ENCODE measurements at regions of chr19 and their contacts with region 1.

Region 1: DNA sequence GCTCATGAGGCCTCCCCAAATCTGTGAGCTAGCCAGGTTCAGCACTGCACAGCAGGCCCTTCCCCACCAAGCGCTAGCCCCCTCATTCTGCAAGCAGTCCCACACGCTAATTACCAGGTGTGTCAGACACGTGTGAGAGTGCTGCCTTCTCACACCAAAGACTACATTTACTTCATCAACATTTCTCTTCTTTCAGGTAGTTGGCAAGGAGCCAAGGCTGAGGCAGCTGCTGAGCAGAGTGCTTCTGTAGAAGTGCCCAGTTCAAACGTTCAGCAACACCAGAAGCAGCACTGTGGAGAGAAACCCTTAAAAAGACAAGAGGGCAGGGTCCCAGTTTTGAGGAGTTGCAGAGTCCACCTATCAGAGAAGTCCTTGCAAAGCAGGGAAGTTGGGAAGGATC is 6.4 kb downstream of the ZNF773 start:
- DNase-seq: no peak
- ATAC-seq: no peak
- H3K4me3 ChIP-seq: no peak overlapping the region
- H3K4me3 Mint-ChIP-seq: no peak overlapping the region
- H3K27ac ChIP-seq: no peak overlapping the region
- H3K27ac Mint-ChIP-seq: no peak overlapping the region
- H3K4me1 ChIP-seq: no peaks in the 10 kb centered on the region
- H3K4me1 Mint-ChIP-seq: peaks cover 15% of the 10 kb centered on the region
- H3K27me3 ChIP-seq: no peaks in the 10 kb centered on the region
- H3K27me3 Mint-ChIP-seq: no peaks in the 10 kb centered on the region
- CTCF ChIP-seq: no peak

Region 2: DNA sequence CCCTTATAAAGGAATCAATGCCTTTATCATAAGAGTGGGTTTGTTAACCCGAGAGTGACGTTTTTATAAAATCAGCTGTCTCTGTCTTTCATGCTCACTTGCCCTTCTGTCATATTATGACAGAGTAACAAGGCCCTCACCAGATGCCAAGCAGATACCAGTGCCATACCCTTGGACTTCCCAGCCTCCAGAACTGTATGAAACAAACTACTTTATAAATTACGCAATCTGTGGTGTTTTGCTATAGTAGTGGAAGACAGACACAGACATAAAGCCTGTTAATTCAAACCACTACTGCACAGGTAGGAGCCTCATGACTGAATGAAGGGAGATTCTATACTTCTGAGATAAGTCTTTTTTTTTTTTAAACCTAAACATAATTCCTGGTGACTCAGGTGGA is 53.9 kb before region 1 on chr19:
- CTCF ChIA-PET with region 1: no interaction called
- POLR2A ChIA-PET with region 1: no interaction called
- intact Hi-C with region 1: no loop called
- DNase-seq: no peak
- ATAC-seq: no peak
- H3K4me3 ChIP-seq: no peak overlapping the region
- H3K4me3 Mint-ChIP-seq: no peak overlapping the region
- H3K27ac ChIP-seq: no peak overlapping the region
- H3K27ac Mint-ChIP-seq: no peak overlapping the region
- H3K4me1 ChIP-seq: no peaks in the 10 kb centered on the region
- H3K4me1 Mint-ChIP-seq: no peaks in the 10 kb centered on the region
- H3K27me3 ChIP-seq: no peaks in the 10 kb centered on the region
- H3K27me3 Mint-ChIP-seq: no peaks in the 10 kb centered on the region
- CTCF ChIP-seq: no peak

Region 3: DNA sequence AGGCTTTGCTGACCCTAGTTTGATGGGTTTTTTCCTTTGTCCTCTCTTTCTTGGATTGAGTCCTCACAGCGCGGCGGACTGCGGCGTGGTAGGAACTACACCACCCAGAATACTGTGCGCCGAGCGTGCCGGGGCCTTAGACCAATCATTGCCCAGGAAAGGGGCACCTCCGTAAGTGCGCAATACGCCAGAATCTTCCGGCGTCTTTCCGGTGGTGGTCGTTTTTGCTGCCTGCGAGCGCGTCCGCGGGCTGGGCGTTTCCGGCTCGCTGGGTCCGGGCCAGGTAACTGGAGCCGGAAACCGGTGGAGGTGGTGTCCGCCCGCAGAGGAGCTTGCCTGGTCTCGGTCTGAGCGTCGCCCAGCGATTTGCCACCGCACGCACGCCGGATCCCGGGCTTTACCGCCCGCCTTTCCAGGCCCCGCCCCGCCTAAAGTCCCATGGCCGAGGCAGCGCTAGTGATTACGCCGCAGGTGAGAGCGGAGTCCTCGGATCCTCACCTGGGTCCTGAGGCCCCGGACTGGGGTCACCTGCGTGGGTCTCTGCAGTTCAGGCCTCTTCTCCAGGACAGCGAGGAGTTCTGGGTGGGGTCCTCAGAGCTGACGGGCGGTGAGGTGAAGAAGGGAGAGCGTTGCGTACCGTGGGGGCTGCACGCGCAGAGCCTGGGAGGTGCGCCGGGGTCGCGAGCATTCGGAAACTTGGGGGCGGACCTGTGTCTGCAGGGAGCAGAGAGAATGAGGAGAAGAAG is 21.1 kb after region 1 on chr19 and contains the start of gene ZNF549:
- CTCF ChIA-PET with region 1: no interaction called
- POLR2A ChIA-PET with region 1: no interaction called
- intact Hi-C with region 1: no loop called
- DNase-seq: peak; percentile 76 to 96 (median 83)
- ATAC-seq: peak; percentile 97
- H3K4me3 ChIP-seq: peak within 1 kb of the TSS; percentile 96
- H3K4me3 Mint-ChIP-seq: peak within 1 kb of the TSS; percentile 97
- H3K27ac ChIP-seq: peak within 1 kb of the TSS; percentile 77 to 81
- H3K27ac Mint-ChIP-seq: peak within 1 kb of the TSS; percentile 94
- H3K4me1 ChIP-seq: peaks cover 18% of the 10 kb centered on the region
- H3K4me1 Mint-ChIP-seq: peaks cover 23% of the 10 kb centered on the region
- H3K27me3 ChIP-seq: no peaks in the 10 kb centered on the region
- H3K27me3 Mint-ChIP-seq: no peaks in the 10 kb centered on the region
- CTCF ChIP-seq: no peak
- total RNA-seq, gene ZNF549: 10.1 to 11.1 TPM

Region 4: GRCh38 chr19:57559404-57560025 is 53.4 kb after region 1 on chr19 and contains the start of gene ZNF550:
- CTCF ChIA-PET with region 1: no interaction called
- POLR2A ChIA-PET with region 1: no interaction called
- intact Hi-C with region 1: loop called in 1 of 2 experiments (anchors 2 kb)
- DNase-seq: peak; percentile 77 to 93 (median 86)
- ATAC-seq: peak; percentile 98
- H3K4me3 ChIP-seq: peak within 1 kb of the TSS; percentile 94
- H3K4me3 Mint-ChIP-seq: peak within 1 kb of the TSS; percentile 95
- H3K27ac ChIP-seq: peak within 1 kb of the TSS; percentile 44 to 45
- H3K27ac Mint-ChIP-seq: peak within 1 kb of the TSS; percentile 64
- H3K4me1 ChIP-seq: peaks cover 25% of the 10 kb centered on the region
- H3K4me1 Mint-ChIP-seq: peaks cover 34% of the 10 kb centered on the region
- H3K27me3 ChIP-seq: peaks cover 0 to 5% of the 10 kb centered on the region in 2 experiments
- H3K27me3 Mint-ChIP-seq: peaks cover 9% of the 10 kb centered on the region
- CTCF ChIP-seq: no peak
- total RNA-seq, gene ZNF550: 15.7 to 20.0 TPM

Region 5: DNA sequence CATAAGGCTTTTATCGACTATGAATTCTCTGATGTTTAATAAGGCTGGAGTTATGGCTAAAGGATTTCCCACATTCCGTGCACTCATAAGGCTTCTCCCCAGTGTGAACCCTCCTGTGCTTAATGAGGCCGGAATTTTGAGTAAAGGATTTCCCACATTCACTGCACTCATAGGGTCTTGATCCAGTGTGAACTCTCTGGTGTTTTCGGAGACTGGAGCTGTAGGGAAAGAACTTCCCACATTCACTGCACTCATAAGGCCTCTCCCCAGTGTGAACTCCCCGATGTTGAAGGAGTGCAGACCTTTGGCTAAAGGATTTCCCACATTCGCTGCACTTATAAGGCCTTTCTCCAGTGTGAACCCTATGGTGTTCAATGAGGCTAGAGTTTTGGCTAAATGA is 195.5 kb after region 1 on chr19:
- CTCF ChIA-PET with region 1: no interaction called
- POLR2A ChIA-PET with region 1: no interaction called
- intact Hi-C with region 1: no loop called
- DNase-seq: no peak
- ATAC-seq: no peak
- H3K4me3 ChIP-seq: no peak overlapping the region
- H3K4me3 Mint-ChIP-seq: no peak overlapping the region
- H3K27ac ChIP-seq: no peak overlapping the region
- H3K27ac Mint-ChIP-seq: no peak overlapping the region
- H3K4me1 ChIP-seq: no peaks in the 10 kb centered on the region
- H3K4me1 Mint-ChIP-seq: peaks cover 18% of the 10 kb centered on the region
- H3K27me3 ChIP-seq: no peaks in the 10 kb centered on the region
- H3K27me3 Mint-ChIP-seq: no peaks in the 10 kb centered on the region
- CTCF ChIP-seq: no peak